ENCODE measurements at regions of chr6 and their contacts with region 1.

Region 1: DNA sequence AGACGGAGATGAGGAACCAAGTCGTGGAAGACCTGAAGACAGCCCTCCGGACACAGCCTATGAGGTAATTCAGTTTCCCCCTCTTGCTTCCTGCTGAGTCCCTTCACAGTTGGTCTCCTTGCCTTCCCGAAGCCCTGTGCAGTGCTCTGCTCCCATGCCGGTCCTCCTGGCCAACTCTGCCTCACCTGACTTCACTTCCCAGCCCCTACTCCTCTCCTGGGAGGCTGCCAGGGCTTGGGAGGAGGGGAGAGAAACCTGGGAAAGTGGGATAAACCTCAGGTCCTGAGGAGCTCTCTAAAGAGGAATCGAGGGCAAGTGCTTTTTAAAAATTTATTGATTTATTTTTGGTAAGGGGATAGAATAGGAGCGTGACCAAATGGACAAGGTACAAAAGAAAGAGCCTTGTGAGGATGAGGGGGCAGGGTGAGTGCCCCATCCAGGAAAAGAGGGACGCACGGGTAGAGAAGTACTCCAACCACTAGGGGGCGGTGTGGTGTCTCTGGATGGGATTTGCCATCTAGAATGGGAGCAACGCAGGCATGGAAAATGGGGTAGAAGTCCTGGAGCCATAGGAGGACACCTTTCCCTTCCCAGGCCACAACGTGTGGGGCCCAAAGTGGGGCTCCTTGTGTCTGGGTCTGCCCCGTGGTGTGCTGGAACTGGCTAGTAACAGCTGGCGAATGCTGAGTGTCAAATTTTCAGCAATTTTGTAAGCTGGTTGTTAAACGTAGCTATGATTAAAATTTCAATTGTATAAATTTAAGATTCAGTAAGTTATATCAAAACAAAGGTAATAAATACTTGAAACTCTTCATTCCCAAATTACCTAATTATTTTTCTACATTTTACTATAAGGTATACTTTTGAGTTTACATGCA is 69.0 kb downstream of the MOCS1 start:
- DNase-seq: no peak
- ATAC-seq: no peak
- H3K4me3 Mint-ChIP-seq: no peak overlapping the region
- H3K27ac Mint-ChIP-seq: no peak overlapping the region
- H3K4me1 Mint-ChIP-seq: no peaks in the 10 kb centered on the region
- H3K27me3 Mint-ChIP-seq: peaks cover 7% of the 10 kb centered on the region
- CTCF ChIP-seq: no peak

Region 2: DNA sequence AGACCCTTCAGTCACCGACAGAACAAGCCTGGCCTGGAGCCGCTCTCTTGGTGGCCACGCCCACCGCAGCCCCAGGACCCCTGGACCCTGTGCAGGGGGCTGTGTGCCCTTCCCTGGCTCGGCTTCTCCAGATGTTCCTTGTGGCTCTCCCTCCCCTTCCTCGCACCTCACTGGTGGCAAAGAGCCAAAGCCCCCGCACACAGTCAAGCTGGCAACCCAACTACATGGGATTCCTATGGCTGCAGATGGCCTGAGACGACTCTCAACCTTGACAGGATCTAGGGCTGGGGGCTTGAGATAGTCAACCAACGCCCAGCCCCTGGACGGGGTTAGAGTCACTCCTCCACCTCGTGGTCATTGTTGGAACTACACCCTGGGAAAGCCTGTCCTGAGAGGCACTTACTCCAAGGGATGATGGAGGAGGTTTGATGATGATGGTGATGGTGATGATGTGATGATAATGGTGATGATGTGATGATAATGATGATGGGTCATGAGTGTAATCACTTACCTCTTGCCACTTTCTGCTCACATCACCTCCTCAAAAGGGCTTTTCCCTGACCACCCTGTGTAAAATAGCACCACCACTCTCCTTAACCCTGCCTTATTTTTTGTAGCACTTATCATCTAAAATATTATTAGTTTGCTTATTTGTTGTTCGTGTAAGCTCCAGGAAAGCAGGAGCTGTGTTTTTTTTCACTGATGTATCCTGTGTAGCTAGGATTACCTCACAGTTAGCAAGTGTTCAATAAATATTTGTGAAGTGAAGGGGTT is 443.5 kb after region 1 on chr6:
- CTCF ChIA-PET with region 1: no interaction called
- POLR2A ChIA-PET with region 1: no interaction called
- intact Hi-C with region 1: loop called (anchors 2 kb)
- DNase-seq: peak; percentile 19
- ATAC-seq: no peak
- H3K4me3 Mint-ChIP-seq: no peak overlapping the region
- H3K27ac Mint-ChIP-seq: no peak overlapping the region
- H3K4me1 Mint-ChIP-seq: peaks cover 2% of the 10 kb centered on the region
- H3K27me3 Mint-ChIP-seq: peaks cover 26% of the 10 kb centered on the region
- CTCF ChIP-seq: no peak